ENCODE measurements at regions of chr4 and their contacts with region 1.

Region 1: GRCh38 chr4:87838890-87839591 is 6.3 kb downstream of the MEPE start:
- DNase-seq: peak in 1 of 2 donors; percentile 60
- H3K4me3 ChIP-seq: no peak overlapping the region
- H3K27ac ChIP-seq: no peak overlapping the region
- H3K4me1 ChIP-seq: no peaks in the 10 kb centered on the region
- H3K27me3 ChIP-seq: peaks cover 0 to 7% (median 0%) of the 10 kb centered on the region in 3 donors
- CTCF ChIP-seq: peak in 4 of 7 experiments; percentile 31 to 75 (median 57)
- EP300 ChIP-seq: no peak
- POLR2A ChIP-seq: no peak

Region 2: DNA sequence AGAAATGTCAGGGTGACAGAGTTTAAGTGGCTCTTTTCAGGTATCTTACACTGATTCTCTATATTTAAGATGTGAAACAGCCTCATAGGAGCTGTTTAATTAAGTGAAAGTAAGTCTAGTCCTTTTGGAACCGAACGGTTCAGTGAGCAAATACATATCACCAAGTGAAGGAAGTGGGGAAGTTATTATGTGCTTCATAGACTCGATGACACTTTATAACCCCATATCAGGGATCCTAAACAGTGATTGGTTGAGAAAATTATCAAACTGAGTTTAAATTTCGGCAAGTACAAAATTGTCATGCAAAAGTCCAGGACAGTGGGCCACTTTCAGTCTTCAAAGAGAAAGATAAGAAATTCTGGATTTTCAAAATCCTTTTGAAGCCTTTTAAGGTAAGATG is 230.8 kb before region 1 on chr4 and contains the start of gene DSPP:
- intact Hi-C with region 1: no loop called
- DNase-seq: no peak
- H3K4me3 ChIP-seq: no peak within 1 kb of the TSS
- H3K27ac ChIP-seq: no peak within 1 kb of the TSS
- H3K4me1 ChIP-seq: no peaks in the 10 kb centered on the region
- H3K27me3 ChIP-seq: no peaks in the 10 kb centered on the region
- CTCF ChIP-seq: no peak
- EP300 ChIP-seq: no peak
- POLR2A ChIP-seq: no peak
- total RNA-seq, gene DSPP: not detected

Region 3: DNA sequence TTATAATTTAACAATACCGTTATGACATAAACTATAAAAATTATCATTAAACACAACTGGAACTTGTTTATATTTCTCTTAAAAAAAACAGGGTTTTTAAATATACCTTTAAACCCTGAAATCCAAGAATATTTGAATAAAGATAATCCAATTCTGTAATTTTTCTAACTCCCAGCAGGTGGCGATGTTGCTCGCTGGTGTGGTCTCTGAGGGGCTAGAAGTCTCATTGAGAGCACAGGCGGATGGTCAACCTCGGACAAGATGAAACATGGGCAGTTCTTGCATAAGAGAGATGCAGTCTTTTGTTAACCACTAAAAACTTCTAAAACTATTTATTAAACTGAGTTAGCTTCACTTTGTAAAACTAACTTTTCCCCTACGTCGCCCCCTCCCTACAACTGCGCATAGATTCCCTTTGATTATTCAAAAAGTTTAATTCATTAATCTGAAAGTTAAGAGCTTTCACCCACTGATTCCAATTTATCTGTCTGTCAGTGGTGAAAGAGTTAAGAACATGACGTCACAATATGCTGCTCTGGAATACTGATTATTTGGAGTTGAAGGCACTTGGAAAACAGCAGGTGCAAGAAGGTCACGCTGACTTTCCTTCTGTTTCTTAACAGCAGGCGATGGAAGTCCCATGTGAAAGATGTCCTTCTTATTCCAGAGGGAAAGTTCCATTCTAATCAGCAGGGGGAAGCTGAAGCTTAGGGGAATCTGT is 159.4 kb before region 1 on chr4:
- intact Hi-C with region 1: loop called (anchors 10 kb)
- DNase-seq: peak in 1 of 2 donors; percentile 76
- H3K4me3 ChIP-seq: no peak overlapping the region
- H3K27ac ChIP-seq: no peak overlapping the region
- H3K4me1 ChIP-seq: peaks cover 0 to 6% (median 0%) of the 10 kb centered on the region in 4 donors
- H3K27me3 ChIP-seq: no peaks in the 10 kb centered on the region
- CTCF ChIP-seq: peak in 5 of 7 experiments; percentile 37 to 66 (median 52)
- EP300 ChIP-seq: no peak
- POLR2A ChIP-seq: no peak